Activated T-helper 1 cell treated with anti-CD3 and anti-CD28 coated beads, Interleukin-12 subunit alpha, Interleukin-12 subunit beta, Interleukin-2, Interleukin-4 antibody, amounts not matched to agents 30 ng/mL and 10 ng/mL and 1 ng/mL, durations not matched to agents 14 hours and 24 hours and 36 hours (primary cell): ENCODE measurements at regions of chr3 and their contacts with region 1.

Region 1: DNA sequence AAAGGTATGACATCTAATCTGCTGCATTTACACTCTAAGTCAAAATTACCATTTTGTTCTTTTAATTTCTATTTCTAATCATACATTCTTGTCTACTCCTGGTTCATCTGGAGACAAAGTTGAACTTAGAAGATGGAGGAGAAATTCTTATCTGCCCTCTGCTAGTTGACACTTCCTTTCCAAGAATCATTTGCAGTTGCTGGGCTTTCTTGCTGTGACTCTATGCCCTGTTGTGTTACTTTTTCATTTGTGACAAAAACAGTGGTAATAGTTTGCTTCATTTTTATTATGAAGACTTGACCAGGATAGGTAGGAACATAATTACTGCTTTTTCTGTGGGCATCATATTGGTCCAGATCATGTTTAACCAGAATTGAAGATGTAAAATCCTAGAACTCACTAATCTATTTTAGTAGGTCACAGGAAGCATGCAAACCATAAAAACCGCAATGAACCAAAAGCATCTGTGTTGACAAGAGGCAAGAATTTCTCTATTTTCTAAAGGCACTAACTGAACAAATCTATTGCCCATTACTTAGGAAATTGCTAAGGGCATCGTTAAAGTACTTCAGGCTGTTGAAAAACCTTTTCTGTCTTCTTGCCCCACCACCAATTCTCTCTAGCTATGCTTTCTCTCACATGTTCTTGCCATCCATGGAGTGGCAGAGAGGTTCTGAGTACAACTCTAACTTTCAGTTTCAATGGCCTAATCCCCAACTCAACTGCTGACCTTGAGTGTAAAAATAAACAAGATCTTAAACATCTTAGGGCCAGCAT is 4.2 kb upstream of the CCR2 start:
- DNase-seq: no peak
- H3K4me3 Mint-ChIP-seq: peak overlapping the region; percentile 54
- H3K27ac Mint-ChIP-seq: peak overlapping the region; percentile 88
- H3K4me1 Mint-ChIP-seq: peaks cover 72% of the 10 kb centered on the region
- H3K27me3 Mint-ChIP-seq: peaks cover 7% of the 10 kb centered on the region

Region 2: GRCh38 chr3:46276502-46277099 is 73.1 kb before region 1 on chr3:
- intact Hi-C with region 1: loop called (anchors 2 kb)
- DNase-seq: peak; percentile 68
- H3K4me3 Mint-ChIP-seq: no peak overlapping the region
- H3K27ac Mint-ChIP-seq: peak overlapping the region; percentile 21
- H3K4me1 Mint-ChIP-seq: peaks cover 62% of the 10 kb centered on the region
- H3K27me3 Mint-ChIP-seq: peaks cover 11% of the 10 kb centered on the region

Region 3: DNA sequence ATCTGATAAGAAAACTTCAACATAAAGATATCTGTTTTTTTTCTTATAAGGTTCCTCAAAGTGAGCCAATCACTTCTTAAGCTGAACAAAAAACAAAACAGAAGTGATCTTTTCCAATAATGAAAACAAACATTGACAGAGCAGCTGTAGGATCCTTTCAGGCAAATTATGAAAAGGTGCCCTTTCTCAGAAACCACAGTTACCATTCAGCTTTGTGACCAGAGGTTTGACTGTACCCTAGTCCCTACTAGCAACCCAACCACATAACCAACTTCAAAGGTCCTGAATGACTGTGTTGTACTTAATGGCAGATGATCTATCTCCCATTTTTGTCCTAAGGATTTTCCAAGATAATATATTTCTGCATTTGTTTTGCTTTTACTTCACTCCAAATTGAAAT is 35.2 kb before region 1 on chr3:
- intact Hi-C with region 1: loop called (anchors 2 kb)
- DNase-seq: no peak
- H3K4me3 Mint-ChIP-seq: no peak overlapping the region
- H3K27ac Mint-ChIP-seq: no peak overlapping the region
- H3K4me1 Mint-ChIP-seq: peaks cover 7% of the 10 kb centered on the region
- H3K27me3 Mint-ChIP-seq: peaks cover 10% of the 10 kb centered on the region

Region 4: DNA sequence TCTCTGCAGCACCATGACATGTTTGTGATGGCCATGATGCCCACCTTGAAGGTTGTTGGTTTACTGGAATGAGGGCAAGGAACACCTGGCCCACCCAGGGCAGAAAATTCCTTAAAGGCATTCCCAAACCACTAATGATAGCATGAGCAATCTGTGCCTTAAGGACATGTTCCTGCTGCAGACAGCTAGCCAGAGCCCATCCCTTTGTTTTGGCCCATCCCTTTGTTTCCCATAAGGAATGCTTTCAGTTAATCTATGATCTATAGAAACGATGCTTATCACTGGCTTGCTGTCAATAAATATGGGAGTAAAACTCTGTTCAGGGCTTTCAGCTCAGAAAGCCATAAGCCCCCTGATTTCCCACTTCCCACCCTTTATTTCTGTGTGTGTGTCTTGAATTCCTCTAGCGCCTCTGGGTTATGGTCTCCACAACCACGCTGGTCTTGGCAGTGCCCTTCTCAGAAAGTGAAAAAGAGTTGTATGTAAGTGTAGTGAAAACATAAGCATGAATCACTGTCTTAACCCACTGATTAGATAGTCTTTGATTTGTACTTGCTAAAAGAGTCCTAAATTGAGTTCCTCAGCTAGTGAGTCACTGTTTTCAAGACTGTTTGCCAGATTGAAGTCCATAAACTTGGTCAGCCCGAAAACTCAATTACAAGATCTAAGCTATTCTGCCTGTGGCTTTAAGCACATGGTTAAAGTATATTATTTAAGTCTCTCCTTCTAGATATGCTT is 14.8 kb before region 1 on chr3:
- intact Hi-C with region 1: loop called (anchors 2 kb)
- DNase-seq: no peak
- H3K4me3 Mint-ChIP-seq: no peak overlapping the region
- H3K27ac Mint-ChIP-seq: peak overlapping the region; percentile 21
- H3K4me1 Mint-ChIP-seq: peaks cover 21% of the 10 kb centered on the region
- H3K27me3 Mint-ChIP-seq: peaks cover 13% of the 10 kb centered on the region

Region 5: GRCh38 chr3:46359733-46360493 is 10.2 kb after region 1 on chr3:
- intact Hi-C with region 1: loop called (anchors 1 kb)
- DNase-seq: no peak
- H3K4me3 Mint-ChIP-seq: no peak overlapping the region
- H3K27ac Mint-ChIP-seq: peak overlapping the region; percentile 41
- H3K4me1 Mint-ChIP-seq: peaks cover 79% of the 10 kb centered on the region
- H3K27me3 Mint-ChIP-seq: peaks cover 16% of the 10 kb centered on the region